HEK293 (cell line): ENCODE measurements at regions of chr6 and their contacts with region 1.

Region 1: GRCh38 chr6:134822920-134823709 is 126.8 kb downstream of the ALDH8A1 start:
- H3K4me3 ChIP-seq: no peak overlapping the region
- H3K27ac ChIP-seq: no peak overlapping the region
- H3K4me1 ChIP-seq: no peaks in the 10 kb centered on the region; the same call in 1 of the 2 replicates
- CTCF ChIP-seq: peak; percentile 95

Region 2: DNA sequence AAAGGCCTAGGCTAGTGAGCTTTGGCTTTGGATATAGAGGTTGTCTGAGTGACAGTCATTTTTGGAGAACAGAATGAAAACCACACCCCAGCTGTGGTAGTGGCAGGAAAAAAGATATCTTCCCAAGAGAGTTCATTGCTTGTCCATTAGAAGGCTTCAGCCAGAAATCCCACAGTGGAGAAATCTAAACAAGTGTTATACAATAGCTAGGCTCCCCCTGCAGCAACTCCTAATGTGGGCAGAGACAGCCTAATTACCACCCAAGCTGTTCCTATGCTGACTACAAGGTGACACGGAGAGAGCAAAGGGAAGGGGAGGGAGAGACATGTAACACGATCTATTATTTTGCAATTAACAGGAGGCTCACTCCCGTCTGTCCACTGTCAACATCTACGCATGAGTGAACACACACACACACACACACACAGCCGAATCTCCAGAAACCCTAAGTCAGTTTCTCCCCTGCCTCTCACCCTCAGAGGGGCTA is 1081.7 kb before region 1 on chr6:
- CTCF ChIA-PET with region 1: no interaction called
- POLR2A ChIA-PET with region 1: no interaction called
- H3K4me3 ChIP-seq: no peak overlapping the region
- H3K27ac ChIP-seq: no peak overlapping the region
- H3K4me1 ChIP-seq: peaks cover 6% of the 10 kb centered on the region
- CTCF ChIP-seq: no peak

Region 3: DNA sequence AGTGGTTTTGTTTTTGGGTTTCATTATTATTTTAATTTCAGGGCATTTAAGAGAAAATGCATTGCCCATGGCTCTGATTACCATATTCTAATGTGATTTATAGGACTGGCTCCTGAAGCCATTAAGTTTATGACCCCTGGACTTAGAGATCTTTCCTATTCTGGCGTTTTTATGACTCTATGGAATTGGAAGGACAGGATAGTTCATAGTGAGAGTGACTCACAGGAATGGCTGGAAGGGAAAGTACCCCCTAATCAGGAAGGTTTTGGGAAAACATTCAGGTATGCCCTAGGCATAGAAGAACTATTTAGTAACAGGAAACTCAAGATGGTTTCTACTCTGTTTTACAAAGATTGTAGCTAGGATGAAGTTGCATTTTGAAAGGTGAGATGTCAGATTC is 662.1 kb before region 1 on chr6:
- CTCF ChIA-PET with region 1: interaction called, 54 read pairs
- POLR2A ChIA-PET with region 1: no interaction called
- H3K4me3 ChIP-seq: no peak overlapping the region
- H3K27ac ChIP-seq: no peak overlapping the region
- H3K4me1 ChIP-seq: no peaks in the 10 kb centered on the region
- CTCF ChIP-seq: no peak

Region 4: DNA sequence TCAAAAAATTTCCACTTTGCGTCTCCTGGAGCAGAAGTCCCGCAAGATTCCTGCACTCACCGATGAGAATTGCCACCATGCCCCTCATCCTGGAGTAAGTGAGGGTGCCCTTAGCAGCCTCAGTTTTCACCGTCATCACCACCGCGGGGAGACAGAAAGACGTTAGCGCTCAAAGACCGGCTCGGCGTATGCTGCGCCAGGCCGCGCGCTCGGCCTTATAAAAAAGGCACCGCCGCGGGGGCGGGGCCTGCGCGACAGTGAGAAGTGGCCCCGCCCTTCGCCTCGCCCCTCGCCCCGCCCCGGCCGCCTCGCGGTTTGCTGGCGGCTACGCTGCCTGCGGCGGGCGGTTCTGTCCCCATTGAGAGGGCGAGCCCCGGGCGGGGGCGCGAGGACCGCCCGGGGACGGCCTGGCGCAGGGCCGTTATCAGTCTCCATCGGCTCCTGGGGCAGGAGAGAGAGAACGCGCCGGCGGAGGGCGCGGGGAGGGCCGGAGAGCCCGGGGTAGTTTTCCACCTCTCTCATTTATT is 648.4 kb before region 1 on chr6:
- CTCF ChIA-PET with region 1: interaction called, 26 read pairs
- POLR2A ChIA-PET with region 1: interaction called, 6 read pairs
- H3K4me3 ChIP-seq: peak overlapping the region; percentile 73
- H3K27ac ChIP-seq: peak overlapping the region; percentile 85
- H3K4me1 ChIP-seq: no peaks in the 10 kb centered on the region
- CTCF ChIP-seq: peak; percentile 2; the same call in 1 of the 2 replicates

Region 5: GRCh38 chr6:134835993-134836392 is 12.9 kb after region 1 on chr6:
- CTCF ChIA-PET with region 1: interaction called, 13 read pairs
- POLR2A ChIA-PET with region 1: no interaction called
- H3K4me3 ChIP-seq: no peak overlapping the region
- H3K27ac ChIP-seq: no peak overlapping the region
- H3K4me1 ChIP-seq: no peaks in the 10 kb centered on the region
- CTCF ChIP-seq: no peak

Region 6: GRCh38 chr6:135114355-135115145 is 291.4 kb after region 1 on chr6:
- CTCF ChIA-PET with region 1: no interaction called
- POLR2A ChIA-PET with region 1: no interaction called
- H3K4me3 ChIP-seq: no peak overlapping the region
- H3K27ac ChIP-seq: no peak overlapping the region
- H3K4me1 ChIP-seq: no peaks in the 10 kb centered on the region
- CTCF ChIP-seq: no peak